AG04450 (cell line): ENCODE measurements at regions of chr5 and their contacts with region 1.

Region 1: GRCh38 chr5:69350664-69351063 is 18.1 kb upstream of the CCDC125 start:
- DNase-seq: no peak
- H3K4me3 ChIP-seq: no peak overlapping the region
- H3K27ac ChIP-seq: no peak overlapping the region
- H3K27me3 ChIP-seq: no peaks in the 10 kb centered on the region
- CTCF ChIP-seq: no peak

Region 2: DNA sequence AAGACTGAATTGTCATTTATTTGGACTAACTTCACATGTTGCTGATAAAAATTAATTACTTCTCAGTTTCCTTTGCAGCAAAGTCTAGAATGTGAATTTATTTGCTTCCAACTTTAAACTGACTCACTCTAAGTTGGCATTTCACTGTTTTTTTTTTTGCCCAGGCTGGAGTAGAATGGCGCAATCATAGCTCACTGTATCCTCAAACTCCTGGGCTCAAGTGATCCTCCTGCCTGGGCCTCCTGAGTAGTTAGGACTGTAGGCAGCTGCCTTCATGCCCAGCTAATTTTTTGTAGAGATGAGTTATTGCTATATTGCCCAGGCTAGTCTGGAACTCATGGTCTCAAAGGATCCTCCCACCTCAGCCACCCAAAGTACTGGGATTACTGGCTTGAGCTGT is 180.2 kb before region 1 on chr5:
- CTCF ChIA-PET with region 1: interaction called, 15 read pairs
- POLR2A ChIA-PET with region 1: no interaction called
- DNase-seq: no peak
- H3K4me3 ChIP-seq: no peak overlapping the region
- H3K27ac ChIP-seq: no peak overlapping the region
- H3K27me3 ChIP-seq: no peaks in the 10 kb centered on the region
- CTCF ChIP-seq: no peak

Region 3: GRCh38 chr5:69300537-69301203 is 50.0 kb before region 1 on chr5:
- CTCF ChIA-PET with region 1: no interaction called
- POLR2A ChIA-PET with region 1: no interaction called
- DNase-seq: no peak
- H3K4me3 ChIP-seq: no peak overlapping the region
- H3K27ac ChIP-seq: no peak overlapping the region
- H3K27me3 ChIP-seq: no peaks in the 10 kb centered on the region
- CTCF ChIP-seq: no peak